CD4-positive, alpha-beta T cell (primary cell): ENCODE measurements at regions of chr3 and their contacts with region 1.

Region 1: DNA sequence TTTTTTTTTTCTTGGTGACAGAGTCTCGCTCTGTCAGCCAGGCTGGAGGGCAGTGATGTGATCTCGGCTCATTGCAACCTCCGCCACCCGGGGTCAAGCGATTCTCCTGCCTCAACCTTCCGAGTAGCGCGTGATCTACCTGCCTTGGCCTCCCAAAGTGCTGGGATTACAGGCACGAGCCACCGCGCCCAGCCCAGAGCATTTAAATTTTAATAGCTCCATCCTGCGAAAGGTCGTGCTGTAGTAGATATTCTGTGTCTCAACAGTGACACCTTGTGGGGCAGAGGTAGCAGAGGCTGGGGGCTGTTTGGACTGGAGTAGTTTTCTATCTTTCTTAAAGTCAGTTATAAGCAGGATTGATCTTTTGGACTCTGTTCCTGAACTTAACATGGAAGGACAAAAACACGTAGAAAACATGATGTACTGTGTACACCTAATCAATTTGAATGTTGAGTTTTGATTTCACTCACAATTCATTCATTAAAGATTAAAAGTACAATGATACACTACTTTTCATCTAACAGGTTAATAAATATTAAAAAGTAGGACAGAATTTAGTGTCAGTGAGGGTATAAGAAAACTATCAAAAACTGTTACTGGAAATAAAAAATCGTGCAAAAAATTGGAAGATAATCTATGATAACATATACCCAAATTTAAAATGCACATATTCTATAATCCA is 11.0 kb upstream of the PDCD6IP start:
- DNase-seq: peak; percentile 25 to 83 (median 43)
- ATAC-seq: peak; percentile 89
- H3K4me3 ChIP-seq: no peak overlapping the region
- H3K4me3 Mint-ChIP-seq: no peak overlapping the region
- H3K27ac ChIP-seq: no peak overlapping the region
- H3K27ac Mint-ChIP-seq: no peak overlapping the region
- H3K4me1 ChIP-seq: peaks cover 6% of the 10 kb centered on the region
- H3K4me1 Mint-ChIP-seq: no peaks in the 10 kb centered on the region
- H3K27me3 ChIP-seq: no peaks in the 10 kb centered on the region
- H3K27me3 Mint-ChIP-seq: peaks cover 30% of the 10 kb centered on the region
- CTCF ChIP-seq: peak; percentile 87

Region 2: DNA sequence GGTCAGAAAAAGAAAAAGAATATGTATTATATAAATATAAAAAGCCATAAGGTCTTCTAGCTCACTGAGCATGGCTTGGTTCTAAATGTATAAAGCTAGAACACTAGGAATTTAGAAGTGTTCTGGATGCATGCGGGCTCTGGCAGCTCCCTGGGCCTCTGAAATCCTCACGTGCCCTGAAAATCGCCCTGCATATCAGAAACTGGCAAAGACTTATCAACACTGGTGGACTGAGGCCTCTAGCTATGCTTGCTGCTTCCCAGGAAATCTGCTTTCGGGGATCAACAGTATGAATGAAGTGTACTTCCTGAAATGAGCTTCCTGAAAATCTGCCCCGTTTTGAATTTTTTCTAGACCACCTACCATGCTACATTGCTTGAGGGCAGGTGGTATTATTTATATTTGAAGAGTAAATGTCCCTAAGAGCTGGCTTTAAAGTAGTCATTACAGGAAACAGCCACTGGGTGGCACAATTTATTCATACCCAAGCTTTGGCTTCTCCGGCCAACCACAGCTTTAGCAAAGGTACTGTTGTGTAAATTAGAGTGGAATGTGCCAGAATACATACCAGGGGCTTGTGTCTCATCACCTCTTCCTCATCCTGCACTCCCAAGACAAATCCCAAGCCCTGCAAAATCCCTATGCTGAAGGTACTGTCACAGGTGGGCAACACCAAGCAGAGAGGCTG is 656.0 kb before region 1 on chr3:
- CTCF ChIA-PET with region 1: interaction called, 5 read pairs
- POLR2A ChIA-PET with region 1: interaction called, 4 read pairs
- intact Hi-C with region 1: loop called (anchors 1 to 2 kb)
- DNase-seq: peak in 9 of 14 experiments; percentile 5 to 67 (median 18)
- ATAC-seq: peak; percentile 67
- H3K4me3 ChIP-seq: no peak overlapping the region
- H3K4me3 Mint-ChIP-seq: no peak overlapping the region
- H3K27ac ChIP-seq: no peak overlapping the region
- H3K27ac Mint-ChIP-seq: no peak overlapping the region
- H3K4me1 ChIP-seq: no peaks in the 10 kb centered on the region
- H3K4me1 Mint-ChIP-seq: peaks cover 6% of the 10 kb centered on the region
- H3K27me3 ChIP-seq: no peaks in the 10 kb centered on the region
- H3K27me3 Mint-ChIP-seq: no peaks in the 10 kb centered on the region
- CTCF ChIP-seq: peak; percentile 90

Region 3: GRCh38 chr3:33636125-33636850 is 151.2 kb before region 1 on chr3:
- CTCF ChIA-PET with region 1: interaction called, 9 read pairs
- POLR2A ChIA-PET with region 1: no interaction called
- intact Hi-C with region 1: loop called (anchors 1 kb)
- DNase-seq: peak in 3 of 14 experiments; percentile 34 to 64 (median 57)
- ATAC-seq: peak; percentile 60
- H3K4me3 ChIP-seq: no peak overlapping the region
- H3K4me3 Mint-ChIP-seq: no peak overlapping the region
- H3K27ac ChIP-seq: no peak overlapping the region
- H3K27ac Mint-ChIP-seq: no peak overlapping the region
- H3K4me1 ChIP-seq: no peaks in the 10 kb centered on the region
- H3K4me1 Mint-ChIP-seq: no peaks in the 10 kb centered on the region
- H3K27me3 ChIP-seq: no peaks in the 10 kb centered on the region
- H3K27me3 Mint-ChIP-seq: no peaks in the 10 kb centered on the region
- CTCF ChIP-seq: peak; percentile 56

Region 4: DNA sequence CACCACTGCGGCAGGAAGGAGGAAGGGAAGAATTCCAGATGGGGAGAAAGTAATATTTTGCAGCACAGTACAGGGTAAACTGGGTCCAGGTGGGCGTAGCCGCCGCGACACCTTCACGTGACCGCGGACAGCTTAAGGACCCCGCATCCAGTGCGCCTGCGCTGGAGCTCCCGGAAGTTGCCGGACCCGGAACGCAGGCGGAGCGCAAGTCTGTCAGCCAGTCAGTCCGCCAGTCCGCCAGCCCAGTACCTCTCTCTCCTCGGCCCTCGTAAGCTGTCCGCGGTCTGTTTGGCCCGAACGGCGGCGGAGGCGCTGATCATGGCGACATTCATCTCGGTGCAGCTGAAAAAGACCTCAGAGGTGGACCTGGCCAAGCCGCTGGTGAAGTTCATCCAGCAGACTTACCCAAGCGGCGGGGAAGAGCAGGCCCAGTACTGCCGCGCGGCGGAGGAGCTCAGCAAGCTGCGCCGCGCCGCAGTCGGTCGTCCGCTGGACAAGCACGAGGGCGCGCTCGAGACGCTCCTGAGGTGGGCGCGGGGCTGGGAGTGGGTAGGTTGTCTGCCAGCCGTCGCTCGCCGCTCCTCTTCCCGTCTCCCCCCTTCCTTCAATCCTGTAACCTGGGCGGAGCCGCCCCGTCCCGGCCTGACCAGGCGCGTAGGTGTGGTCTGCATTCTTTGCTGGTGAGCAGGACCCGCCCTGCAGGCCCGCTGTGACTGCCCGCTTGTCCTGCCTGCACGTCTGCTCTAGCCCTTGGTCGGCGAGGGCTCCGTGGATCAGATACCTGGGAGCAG is 11.1 kb after region 1 on chr3 and contains the start of gene PDCD6IP:
- CTCF ChIA-PET with region 1: interaction called, 21 read pairs
- POLR2A ChIA-PET with region 1: interaction called, 14 read pairs
- intact Hi-C with region 1: no loop called
- DNase-seq: peak; percentile 76 to 94 (median 84)
- ATAC-seq: peak; percentile 75
- H3K4me3 ChIP-seq: peak within 1 kb of the TSS; percentile 82
- H3K4me3 Mint-ChIP-seq: peak within 1 kb of the TSS; percentile 99
- H3K27ac ChIP-seq: peak within 1 kb of the TSS; percentile 71 to 75
- H3K27ac Mint-ChIP-seq: peak within 1 kb of the TSS; percentile 93
- H3K4me1 ChIP-seq: peaks cover 26% of the 10 kb centered on the region
- H3K4me1 Mint-ChIP-seq: peaks cover 64% of the 10 kb centered on the region
- H3K27me3 ChIP-seq: no peaks in the 10 kb centered on the region
- H3K27me3 Mint-ChIP-seq: no peaks in the 10 kb centered on the region
- CTCF ChIP-seq: peak; percentile 23
- total RNA-seq, gene PDCD6IP: 109 to 112 TPM